ENCODE measurements at regions of chr7 and their contacts with region 1.

Region 1: GRCh38 chr7:106947244-106947728 is 82.2 kb downstream of the PIK3CG start:
- DNase-seq: peak; percentile 85
- H3K4me3 ChIP-seq: no peak overlapping the region
- H3K27ac ChIP-seq: no peak overlapping the region
- H3K4me1 ChIP-seq: no peaks in the 10 kb centered on the region
- H3K27me3 ChIP-seq: no peaks in the 10 kb centered on the region
- CTCF ChIP-seq: peak; percentile 68 to 79 (median 75)
- POLR2A ChIP-seq: no peak

Region 2: GRCh38 chr7:106752367-106752766 is 194.9 kb before region 1 on chr7:
- intact Hi-C with region 1: no loop called
- DNase-seq: no peak
- H3K4me3 ChIP-seq: no peak overlapping the region
- H3K27ac ChIP-seq: no peak overlapping the region
- H3K4me1 ChIP-seq: no peaks in the 10 kb centered on the region
- H3K27me3 ChIP-seq: no peaks in the 10 kb centered on the region
- CTCF ChIP-seq: no peak
- POLR2A ChIP-seq: no peak

Region 3: GRCh38 chr7:107147464-107148393 is 200.4 kb after region 1 on chr7:
- intact Hi-C with region 1: loop called (anchors 5 kb)
- DNase-seq: no peak
- H3K4me3 ChIP-seq: no peak overlapping the region
- H3K27ac ChIP-seq: no peak overlapping the region
- H3K4me1 ChIP-seq: no peaks in the 10 kb centered on the region
- H3K27me3 ChIP-seq: no peaks in the 10 kb centered on the region
- CTCF ChIP-seq: peak in 1 of 3 experiments; percentile 44
- POLR2A ChIP-seq: no peak